PC-9 (cell line): ENCODE measurements at regions of chr20 and their contacts with region 1.

Region 1: DNA sequence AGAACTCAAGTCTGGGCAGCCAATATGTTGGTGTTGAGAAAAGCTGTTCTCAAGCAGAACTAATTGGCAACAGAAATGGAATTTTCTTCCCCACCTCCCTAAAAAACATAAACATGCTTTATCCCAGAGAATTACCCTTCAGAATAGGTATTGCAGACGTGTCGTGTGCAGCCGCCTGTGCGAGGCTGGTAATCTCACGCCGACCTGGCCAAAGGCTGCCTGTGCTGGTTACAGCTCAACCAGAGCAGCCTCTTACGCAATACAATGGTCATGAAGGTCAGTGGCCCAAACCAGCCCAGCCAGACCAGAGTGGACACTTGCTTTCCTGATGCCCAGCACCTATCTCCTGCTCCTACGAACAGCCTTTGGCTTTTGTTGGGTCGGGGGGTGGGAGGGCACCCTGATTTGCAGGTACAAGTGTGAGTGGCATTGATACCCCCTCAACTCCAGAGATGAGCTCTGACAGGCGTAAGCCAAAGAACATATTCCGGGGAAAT is 10.9 kb downstream of the RIPOR3 start:
- DNase-seq: peak; percentile 69 to 86
- H3K4me3 ChIP-seq: peak overlapping the region; percentile 30; the same call in 1 of the 2 replicates
- H3K27ac ChIP-seq: peak overlapping the region; percentile 80
- H3K4me1 ChIP-seq: peaks cover 57% of the 10 kb centered on the region
- H3K27me3 ChIP-seq: no peaks in the 10 kb centered on the region
- CTCF ChIP-seq: no peak

Region 2: GRCh38 chr20:50625986-50626677 is 54.3 kb before region 1 on chr20:
- CTCF ChIA-PET with region 1: interaction called, 3 read pairs
- POLR2A ChIA-PET with region 1: no interaction called
- intact Hi-C with region 1: loop called (anchors 1 kb)
- DNase-seq: peak in 1 of 2 experiments; percentile 65
- H3K4me3 ChIP-seq: no peak overlapping the region
- H3K27ac ChIP-seq: no peak overlapping the region
- H3K4me1 ChIP-seq: peaks cover 45% of the 10 kb centered on the region
- H3K27me3 ChIP-seq: no peaks in the 10 kb centered on the region
- CTCF ChIP-seq: peak; percentile 72

Region 3: DNA sequence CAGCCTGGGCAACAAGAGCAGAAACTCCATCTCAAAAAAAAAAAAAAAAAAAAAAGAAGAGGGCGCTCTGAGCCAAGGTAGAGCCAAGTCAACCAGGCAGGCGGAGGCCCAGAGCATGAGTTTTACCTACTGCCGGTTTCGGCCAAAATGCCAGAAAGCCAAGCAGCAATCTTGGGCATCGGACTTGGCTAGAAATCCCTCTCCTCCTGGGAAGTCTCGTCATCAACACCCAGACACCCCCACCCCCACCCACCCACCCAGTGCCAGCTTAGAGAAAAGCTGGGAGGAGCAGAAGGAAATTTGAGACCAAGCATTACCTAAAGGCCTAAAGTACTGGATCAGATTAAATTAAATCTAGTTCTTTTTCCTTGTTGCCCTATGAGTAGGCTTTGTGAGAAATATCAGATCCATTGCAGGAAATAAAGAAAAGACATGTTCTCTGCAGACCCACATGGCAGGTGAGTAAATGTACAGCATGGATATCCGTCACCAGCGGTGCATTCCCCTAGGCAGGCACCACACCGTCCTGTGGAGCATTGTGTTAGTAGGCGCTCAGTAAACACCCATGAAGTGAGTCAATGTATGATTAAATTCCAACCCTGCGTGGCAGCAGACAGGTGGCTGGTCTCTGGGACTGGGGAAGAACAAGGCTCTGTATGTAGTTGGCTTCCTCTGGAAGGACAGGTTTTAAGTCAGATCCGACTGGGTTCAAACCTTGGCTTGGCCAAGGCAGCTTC is 10.2 kb before region 1 on chr20:
- CTCF ChIA-PET with region 1: no interaction called
- POLR2A ChIA-PET with region 1: no interaction called
- intact Hi-C with region 1: loop called (anchors 1 kb)
- DNase-seq: peak; percentile 79 to 96
- H3K4me3 ChIP-seq: no peak overlapping the region
- H3K27ac ChIP-seq: peak overlapping the region; percentile 86
- H3K4me1 ChIP-seq: peaks cover 50% of the 10 kb centered on the region
- H3K27me3 ChIP-seq: no peaks in the 10 kb centered on the region
- CTCF ChIP-seq: no peak

Region 4: DNA sequence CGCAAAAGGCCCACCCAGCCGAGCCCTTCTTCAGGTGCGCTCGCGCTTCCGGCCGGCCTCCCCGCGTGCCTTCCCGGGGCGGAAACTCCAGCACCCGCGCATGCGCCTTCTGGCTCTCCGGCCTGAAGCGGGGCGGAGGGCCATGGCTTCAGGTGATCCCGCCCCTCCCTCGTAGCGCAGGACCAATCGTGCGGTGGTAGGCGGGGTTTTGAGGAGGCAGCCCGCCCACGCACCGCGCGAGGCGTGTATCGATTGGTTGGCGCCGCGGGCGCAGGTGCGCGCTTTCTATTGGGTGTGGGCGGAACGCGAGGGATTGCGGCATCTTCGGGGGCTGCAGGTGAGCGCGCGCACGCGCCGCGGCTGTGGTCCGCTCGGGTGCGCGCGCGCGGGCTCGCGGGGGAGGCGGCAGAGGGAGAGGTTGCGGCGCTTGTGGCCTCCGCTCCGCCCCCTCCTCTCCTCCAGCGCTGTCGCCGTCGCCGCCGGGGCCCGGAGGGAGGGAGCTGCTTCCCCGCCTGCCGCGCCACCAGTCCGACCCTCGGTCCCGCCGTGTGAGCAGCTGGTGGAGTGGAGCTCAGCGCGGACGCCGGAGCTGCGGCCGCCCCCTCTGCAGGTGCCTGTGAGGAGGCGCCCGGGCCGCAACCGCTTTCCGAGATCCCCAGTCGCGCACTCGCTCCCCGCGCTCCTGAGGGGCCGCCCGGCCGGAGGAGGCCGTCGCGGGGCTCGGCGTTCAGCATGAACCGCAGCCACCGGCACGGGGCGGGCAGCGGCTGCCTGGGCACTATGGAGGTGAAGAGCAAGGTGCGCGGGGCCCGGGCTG is 50.8 kb after region 1 on chr20 and contains the start of gene PARD6B:
- CTCF ChIA-PET with region 1: interaction called, 9 read pairs
- POLR2A ChIA-PET with region 1: interaction called, 36 read pairs
- intact Hi-C with region 1: loop called (anchors 1 kb)
- DNase-seq: peak; percentile 96 to 100
- H3K4me3 ChIP-seq: peak within 1 kb of the TSS; percentile 85
- H3K27ac ChIP-seq: peak within 1 kb of the TSS; percentile 91
- H3K4me1 ChIP-seq: peaks cover 71% of the 10 kb centered on the region
- H3K27me3 ChIP-seq: no peaks in the 10 kb centered on the region
- CTCF ChIP-seq: no peak
- total RNA-seq, gene PARD6B: 52.2 and 80.3 TPM in 2 replicates

Region 5: DNA sequence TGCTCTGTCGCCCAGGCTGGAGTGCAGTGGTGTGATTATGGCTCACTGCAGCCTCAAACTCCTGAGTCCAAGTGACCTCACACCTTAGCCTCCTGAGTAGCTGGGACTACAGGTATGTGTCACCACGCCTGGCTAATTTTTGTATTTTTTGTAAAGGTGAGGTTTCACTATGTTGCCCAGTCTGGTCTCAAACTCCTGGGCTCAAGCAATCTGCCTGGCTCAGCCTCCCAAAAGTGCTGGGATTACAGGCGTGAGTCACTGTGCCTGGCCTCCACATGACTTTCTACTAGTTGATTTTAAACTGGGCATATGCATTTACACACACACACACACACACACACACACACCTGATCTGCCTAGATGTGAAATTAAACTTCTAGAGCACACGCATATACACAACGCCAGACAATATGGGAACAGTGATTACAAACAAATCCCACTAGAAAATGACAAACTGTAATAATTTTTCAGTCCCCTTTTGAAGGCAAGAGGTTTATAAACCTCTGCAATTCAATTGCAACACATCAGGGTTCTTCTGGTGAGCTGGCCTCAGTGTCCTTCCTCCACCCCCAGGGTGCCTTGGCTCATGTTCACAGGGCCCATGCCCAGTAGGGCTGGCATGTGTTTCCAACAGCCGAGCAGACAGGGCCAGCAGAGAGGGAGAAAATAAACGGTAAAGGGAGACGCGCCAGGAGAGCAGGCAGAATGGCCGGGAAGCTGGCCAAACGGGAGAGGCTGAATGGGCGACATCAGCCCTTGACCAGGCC is 82.2 kb after region 1 on chr20:
- CTCF ChIA-PET with region 1: interaction called, 10 read pairs
- POLR2A ChIA-PET with region 1: no interaction called
- intact Hi-C with region 1: loop called (anchors 1 kb)
- DNase-seq: peak; percentile 50 to 72
- H3K4me3 ChIP-seq: peak overlapping the region; percentile 22; the same call in 1 of the 2 replicates
- H3K27ac ChIP-seq: peak overlapping the region; percentile 96
- H3K4me1 ChIP-seq: peaks cover 64% of the 10 kb centered on the region
- H3K27me3 ChIP-seq: no peaks in the 10 kb centered on the region
- CTCF ChIP-seq: no peak